ENCODE measurements at regions of chr3 and their contacts with region 1.

Region 1: DNA sequence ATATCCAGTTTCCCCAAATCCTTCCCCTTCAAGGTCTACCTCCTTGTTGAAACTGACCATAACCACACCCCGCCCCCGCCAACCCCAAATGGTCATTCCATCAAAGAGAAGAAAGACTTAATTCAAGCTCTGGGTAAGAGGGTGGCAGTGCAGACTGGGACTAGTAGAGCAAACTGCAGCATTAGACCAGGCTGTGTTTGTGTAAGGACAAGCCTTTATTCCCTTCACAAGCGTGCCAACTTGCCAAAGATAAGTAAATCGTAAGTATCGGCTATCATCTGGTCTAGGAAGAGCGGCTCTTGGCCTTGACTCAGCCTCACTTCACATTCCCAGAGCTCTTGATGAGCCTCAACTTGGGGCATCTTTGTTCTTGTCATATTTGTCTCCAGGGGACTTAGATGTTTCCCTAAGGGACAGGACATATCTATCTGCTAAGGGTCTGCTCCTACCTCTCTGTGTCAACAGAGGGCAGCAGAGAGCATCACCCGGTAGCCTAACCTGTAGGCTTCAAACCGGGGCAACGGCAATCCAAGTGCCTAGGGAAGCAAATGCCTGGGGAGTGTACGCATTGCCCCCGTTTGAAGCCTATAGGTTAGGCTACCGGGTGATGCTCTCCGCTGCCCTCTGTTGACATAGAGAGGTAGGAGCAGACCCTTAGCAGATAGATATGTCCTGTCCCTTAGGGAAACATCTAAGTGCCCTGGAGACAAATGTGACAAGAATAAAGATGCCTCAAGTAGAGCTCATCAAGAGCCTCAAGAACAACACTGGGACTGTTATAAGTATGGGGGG is 8.9 kb upstream of the MAP3K13 start:
- DNase-seq: peak; percentile 87 to 93
- H3K4me3 ChIP-seq: no peak overlapping the region
- H3K4me1 ChIP-seq: no peaks in the 10 kb centered on the region
- H3K27me3 ChIP-seq: peaks cover 6% of the 10 kb centered on the region; the same call in 1 of the 2 replicates

Region 2: GRCh38 chr3:185200635-185201034 is 153.4 kb before region 1 on chr3:
- in situ Hi-C with region 1: no loop called
- DNase-seq: no peak
- H3K4me3 ChIP-seq: no peak overlapping the region
- H3K4me1 ChIP-seq: no peaks in the 10 kb centered on the region
- H3K27me3 ChIP-seq: no peaks in the 10 kb centered on the region

Region 3: GRCh38 chr3:185552358-185552877 is 198.4 kb after region 1 on chr3 and contains the start of gene LIPH:
- in situ Hi-C with region 1: loop called (anchors 10 kb)
- DNase-seq: peak; percentile 70 to 93
- H3K4me3 ChIP-seq: peak within 1 kb of the TSS; percentile 20
- H3K4me1 ChIP-seq: peaks cover 29% of the 10 kb centered on the region
- H3K27me3 ChIP-seq: no peaks in the 10 kb centered on the region

Region 4: DNA sequence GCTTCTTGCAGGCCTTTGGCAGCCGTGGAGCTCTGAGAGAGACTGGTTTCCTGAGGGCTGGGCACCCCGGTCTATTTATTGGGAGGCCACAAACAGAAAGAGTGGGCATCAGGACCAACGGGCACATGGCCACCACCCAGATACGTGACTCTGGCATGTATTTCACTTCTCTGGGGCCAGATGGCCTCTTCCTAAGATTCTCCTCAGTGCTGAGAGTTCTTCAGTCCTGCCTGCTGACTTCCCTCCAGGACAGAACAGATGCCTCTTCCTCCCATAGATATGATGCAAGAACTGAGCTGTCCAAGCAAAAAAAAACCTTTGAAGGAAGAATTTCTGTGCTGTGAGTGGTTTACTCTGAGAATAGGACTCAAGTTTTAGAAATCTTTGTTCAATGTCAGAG is 363.1 kb after region 1 on chr3:
- in situ Hi-C with region 1: no loop called
- DNase-seq: no peak
- H3K4me3 ChIP-seq: no peak overlapping the region
- H3K4me1 ChIP-seq: no peaks in the 10 kb centered on the region
- H3K27me3 ChIP-seq: no peaks in the 10 kb centered on the region